ENCODE measurements at regions of chr21 and their contacts with region 1.

Region 1: DNA sequence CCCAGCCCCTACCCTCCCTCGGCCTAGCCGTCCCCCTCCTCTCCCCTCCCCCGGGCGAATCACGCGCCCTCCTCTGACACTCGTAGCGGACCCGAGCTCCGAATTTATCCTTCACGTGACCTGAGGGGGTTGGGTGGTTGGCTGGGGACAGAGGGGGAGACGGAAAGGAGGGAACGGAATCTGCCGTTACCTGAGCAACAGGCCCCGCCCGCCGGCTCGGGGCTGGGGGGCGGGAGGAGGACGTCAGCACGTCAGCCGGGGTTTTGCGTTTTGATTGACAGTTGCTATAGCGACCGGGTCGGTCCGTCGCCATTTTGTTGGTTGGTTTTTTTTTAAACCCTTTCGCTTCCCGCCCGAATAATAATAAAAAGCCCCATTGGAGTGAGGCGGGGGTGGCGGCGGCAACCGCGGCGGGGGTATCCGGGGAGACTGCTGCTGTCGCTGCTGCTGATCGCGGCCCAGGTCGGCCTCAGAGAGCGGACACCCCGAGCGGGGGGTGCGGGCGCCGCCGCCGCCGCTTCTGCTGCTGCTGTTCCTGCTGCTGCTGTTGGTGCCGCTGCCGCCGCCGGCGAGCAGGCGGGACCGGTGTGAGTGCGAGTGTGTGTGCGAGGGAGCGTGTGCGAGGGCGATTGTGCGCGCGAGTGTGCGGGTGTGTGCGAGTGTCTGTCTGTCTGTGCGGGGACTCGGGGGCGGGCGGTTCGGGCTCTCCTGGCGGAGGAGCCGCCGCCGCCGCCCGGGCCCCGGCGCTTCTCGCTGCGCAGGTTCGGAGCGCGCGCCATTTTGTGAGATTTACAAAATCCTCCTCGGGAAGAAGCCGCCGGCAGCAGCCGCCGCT is at the start of gene DYRK1A:
- DNase-seq: peak; percentile 100
- H3K4me3 ChIP-seq: peak within 1 kb of the TSS; percentile 86 to 98 (median 96)
- H3K27ac ChIP-seq: peak within 1 kb of the TSS; percentile 99 to 100 (median 100)
- H3K4me1 ChIP-seq: peaks cover 0 to 43% (median 39%) of the 10 kb centered on the region in 4 donors
- H3K27me3 ChIP-seq: no peaks in the 10 kb centered on the region
- CTCF ChIP-seq: no peak
- EP300 ChIP-seq: peak; percentile 29 to 96 (median 76)
- POLR2A ChIP-seq: peak; percentile 45 to 47
- total RNA-seq, gene DYRK1A: 62.9 to 74.1 (median 69.5) TPM

Region 2: GRCh38 chr21:37072988-37073416 is 293.7 kb before region 1 on chr21 and contains the starts of genes PIGP and TTC3:
- intact Hi-C with region 1: loop called (anchors 5 kb)
- DNase-seq: peak; percentile 97
- H3K4me3 ChIP-seq: peak within 1 kb of the TSS; percentile 88 to 93 (median 90)
- H3K27ac ChIP-seq: peak within 1 kb of the TSS; percentile 94 to 99 (median 98)
- H3K4me1 ChIP-seq: peaks cover 0 to 36% (median 26%) of the 10 kb centered on the region in 4 donors
- H3K27me3 ChIP-seq: no peaks in the 10 kb centered on the region
- CTCF ChIP-seq: no peak
- EP300 ChIP-seq: peak in 1 of 4 donors; percentile 48
- POLR2A ChIP-seq: peak; percentile 3 to 61
- total RNA-seq, gene PIGP: 10.2 to 36.7 (median 17.8) TPM
- total RNA-seq, gene TTC3: 108 to 151 (median 114) TPM

Region 3: DNA sequence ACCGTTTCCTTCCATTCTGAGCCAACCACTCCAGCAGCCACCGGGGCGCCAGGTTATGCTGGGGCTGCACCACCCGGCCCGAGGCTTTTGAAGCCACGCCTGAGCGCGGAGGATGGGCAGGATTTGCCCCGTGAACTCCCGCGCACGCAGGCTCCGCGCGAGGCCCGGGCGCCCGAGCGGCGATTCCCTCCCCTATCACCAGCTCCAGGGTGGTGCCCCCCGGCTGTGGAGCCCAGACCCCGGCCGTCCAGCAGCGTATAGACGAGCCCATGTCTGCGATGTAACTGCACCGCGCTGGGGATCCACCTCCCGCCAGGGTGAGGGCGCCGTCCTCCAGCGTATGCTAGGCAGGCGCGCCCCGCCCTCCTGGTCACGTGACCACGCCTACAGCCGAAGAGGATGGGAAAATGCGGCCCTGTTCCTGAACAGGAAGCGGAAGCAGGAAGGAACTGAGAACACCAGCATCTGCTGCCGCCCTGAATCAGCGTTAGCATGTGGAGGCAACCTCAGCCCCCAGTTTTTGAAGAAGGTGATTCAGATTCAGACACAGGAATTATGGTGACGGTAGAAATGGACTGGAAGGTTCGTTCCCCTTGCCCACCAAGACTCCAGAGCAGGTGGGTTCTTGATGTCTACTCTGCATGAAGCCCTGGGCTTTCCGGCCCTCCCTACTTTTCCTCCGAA is 145.6 kb before region 1 on chr21:
- intact Hi-C with region 1: loop called (anchors 5 kb)
- DNase-seq: peak; percentile 97
- H3K4me3 ChIP-seq: peak overlapping the region; percentile 51 to 65 (median 60)
- H3K27ac ChIP-seq: peak overlapping the region; percentile 74 to 87 (median 78)
- H3K4me1 ChIP-seq: peaks cover 0 to 9% (median 6%) of the 10 kb centered on the region in 4 donors
- H3K27me3 ChIP-seq: no peaks in the 10 kb centered on the region
- CTCF ChIP-seq: peak in 2 of 4 experiments; percentile 10 to 22
- EP300 ChIP-seq: no peak
- POLR2A ChIP-seq: peak in 1 of 2 donors; percentile 46

Region 4: GRCh38 chr21:37341607-37341960 is 25.1 kb before region 1 on chr21:
- intact Hi-C with region 1: loop called (anchors 1 kb)
- DNase-seq: no peak
- H3K4me3 ChIP-seq: no peak overlapping the region
- H3K27ac ChIP-seq: peak overlapping the region in 2 of 4 donors; percentile 11 to 15
- H3K4me1 ChIP-seq: peaks cover 0 to 21% (median 16%) of the 10 kb centered on the region in 4 donors
- H3K27me3 ChIP-seq: no peaks in the 10 kb centered on the region
- CTCF ChIP-seq: no peak
- EP300 ChIP-seq: no peak
- POLR2A ChIP-seq: no peak

Region 5: DNA sequence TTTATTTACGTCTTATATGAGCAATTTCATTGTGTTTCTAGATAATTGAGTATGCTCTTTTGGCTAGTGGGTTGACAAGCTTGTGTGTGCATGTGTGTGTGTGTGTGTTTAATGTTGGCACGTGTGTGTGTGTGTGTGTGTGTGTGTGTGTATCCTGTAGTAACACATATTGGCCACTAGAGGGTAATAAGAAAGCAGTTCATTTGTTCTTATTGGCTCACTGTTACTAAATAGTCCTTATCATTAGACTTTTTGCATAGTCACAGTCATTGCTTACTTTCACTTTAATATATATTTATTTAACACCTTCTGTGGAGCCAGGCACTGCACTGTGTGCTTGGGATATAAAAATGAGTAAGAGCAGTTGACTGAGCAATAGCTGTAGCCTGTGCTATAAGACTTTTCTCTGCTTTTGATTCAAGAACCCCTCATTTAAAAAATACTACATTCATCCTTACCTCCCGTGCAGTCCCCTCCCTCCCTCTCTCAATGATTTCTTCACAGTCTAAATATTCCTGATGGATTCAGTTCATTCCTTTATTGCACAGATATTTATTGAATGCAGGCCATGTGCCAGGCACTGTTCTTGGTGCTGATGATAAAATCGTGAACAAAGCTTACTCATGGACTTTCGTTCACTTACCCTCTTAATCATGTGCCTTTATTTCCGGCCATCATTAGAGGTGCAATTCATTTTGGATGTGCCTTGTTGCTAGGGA is 96.5 kb after region 1 on chr21:
- intact Hi-C with region 1: loop called (anchors 5 kb)
- DNase-seq: no peak
- H3K4me3 ChIP-seq: no peak overlapping the region
- H3K27ac ChIP-seq: peak overlapping the region in 2 of 4 donors; percentile 24 to 30
- H3K4me1 ChIP-seq: peaks cover 0 to 65% (median 51%) of the 10 kb centered on the region in 4 donors
- H3K27me3 ChIP-seq: no peaks in the 10 kb centered on the region
- CTCF ChIP-seq: peak; percentile 37 to 88 (median 44)
- EP300 ChIP-seq: no peak
- POLR2A ChIP-seq: no peak